T-cell (primary cell): ENCODE measurements at regions of chr9 and their contacts with region 1.

Region 1: GRCh38 chr9:9133526-9133925 is 1333.9 kb upstream of the DMAC1 start:
- DNase-seq: no peak
- ATAC-seq: no peak
- H3K4me3 ChIP-seq: no peak overlapping the region
- H3K4me3 Mint-ChIP-seq: no peak overlapping the region
- H3K27ac ChIP-seq: no peak overlapping the region
- H3K27ac Mint-ChIP-seq: no peak overlapping the region
- H3K4me1 ChIP-seq: no peaks in the 10 kb centered on the region
- H3K4me1 Mint-ChIP-seq: no peaks in the 10 kb centered on the region
- H3K27me3 ChIP-seq: no peaks in the 10 kb centered on the region
- H3K27me3 Mint-ChIP-seq: no peaks in the 10 kb centered on the region

Region 2: GRCh38 chr9:8859416-8859815 is 274.1 kb before region 1 on chr9:
- CTCF ChIA-PET with region 1: no interaction called
- POLR2A ChIA-PET with region 1: interaction called in 1 of 2 experiments, 10 read pairs
- DNase-seq: no peak
- ATAC-seq: no peak
- H3K4me3 ChIP-seq: no peak overlapping the region
- H3K4me3 Mint-ChIP-seq: peak overlapping the region in 1 of 3 donors; percentile 60
- H3K27ac ChIP-seq: no peak overlapping the region
- H3K27ac Mint-ChIP-seq: no peak overlapping the region
- H3K4me1 ChIP-seq: peaks cover 5 to 10% of the 10 kb centered on the region in 2 experiments
- H3K4me1 Mint-ChIP-seq: peaks cover 8 to 15% (median 12%) of the 10 kb centered on the region in 3 donors
- H3K27me3 ChIP-seq: peaks cover 0 to 21% of the 10 kb centered on the region in 2 experiments
- H3K27me3 Mint-ChIP-seq: peaks cover 36 to 45% of the 10 kb centered on the region in 2 donors

Region 3: DNA sequence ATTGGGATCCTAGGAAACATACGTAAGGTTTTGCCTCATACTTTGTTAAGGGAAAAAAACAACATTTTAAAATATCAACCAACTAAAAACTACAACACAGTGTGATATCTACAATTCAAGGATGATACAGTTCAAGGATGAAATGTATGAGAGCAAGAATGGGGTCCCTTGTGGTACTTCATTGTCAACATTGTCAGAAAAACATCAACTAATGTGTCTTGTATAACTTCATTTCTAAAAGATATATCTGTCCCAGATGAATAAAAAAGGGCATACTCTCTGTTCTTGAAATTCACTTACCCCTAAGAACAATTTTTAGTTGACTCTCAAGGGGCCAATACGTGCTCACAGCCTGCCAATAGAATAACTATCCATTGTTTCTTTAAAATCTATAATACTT is 228.8 kb after region 1 on chr9:
- CTCF ChIA-PET with region 1: no interaction called
- POLR2A ChIA-PET with region 1: no interaction called
- DNase-seq: no peak
- ATAC-seq: no peak
- H3K4me3 ChIP-seq: no peak overlapping the region
- H3K4me3 Mint-ChIP-seq: no peak overlapping the region
- H3K27ac ChIP-seq: no peak overlapping the region
- H3K27ac Mint-ChIP-seq: no peak overlapping the region
- H3K4me1 ChIP-seq: no peaks in the 10 kb centered on the region
- H3K4me1 Mint-ChIP-seq: no peaks in the 10 kb centered on the region
- H3K27me3 ChIP-seq: no peaks in the 10 kb centered on the region
- H3K27me3 Mint-ChIP-seq: no peaks in the 10 kb centered on the region